MCF 10A (cell line): ENCODE measurements at regions of chr6 and their contacts with region 1.

Region 1: DNA sequence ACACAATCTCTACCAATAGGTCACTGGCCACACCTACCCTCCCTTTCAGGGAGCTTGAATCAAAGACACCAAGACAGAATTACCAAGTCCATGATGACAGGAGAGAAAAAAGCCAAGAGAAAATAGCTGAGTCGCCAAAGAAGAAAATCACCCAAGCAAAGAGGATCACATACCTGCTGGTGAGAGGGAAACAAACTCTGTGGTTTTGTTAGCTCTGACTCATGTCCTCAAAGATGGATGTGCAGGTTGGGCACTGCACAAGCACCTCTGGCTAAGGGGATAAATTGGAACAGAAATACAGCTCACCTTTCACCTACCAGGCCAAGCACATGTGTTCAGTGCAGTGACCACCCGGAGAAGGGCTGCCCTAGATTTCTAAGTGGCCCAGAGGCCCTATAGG is 114.8 kb downstream of the TFAP2A start:
- DNase-seq: peak; percentile 67
- H3K4me3 Mint-ChIP-seq: no peak overlapping the region
- H3K27ac Mint-ChIP-seq: peak overlapping the region; percentile 50
- H3K4me1 Mint-ChIP-seq: peaks cover 8% of the 10 kb centered on the region
- H3K27me3 Mint-ChIP-seq: no peaks in the 10 kb centered on the region
- CTCF ChIP-seq: no peak

Region 2: DNA sequence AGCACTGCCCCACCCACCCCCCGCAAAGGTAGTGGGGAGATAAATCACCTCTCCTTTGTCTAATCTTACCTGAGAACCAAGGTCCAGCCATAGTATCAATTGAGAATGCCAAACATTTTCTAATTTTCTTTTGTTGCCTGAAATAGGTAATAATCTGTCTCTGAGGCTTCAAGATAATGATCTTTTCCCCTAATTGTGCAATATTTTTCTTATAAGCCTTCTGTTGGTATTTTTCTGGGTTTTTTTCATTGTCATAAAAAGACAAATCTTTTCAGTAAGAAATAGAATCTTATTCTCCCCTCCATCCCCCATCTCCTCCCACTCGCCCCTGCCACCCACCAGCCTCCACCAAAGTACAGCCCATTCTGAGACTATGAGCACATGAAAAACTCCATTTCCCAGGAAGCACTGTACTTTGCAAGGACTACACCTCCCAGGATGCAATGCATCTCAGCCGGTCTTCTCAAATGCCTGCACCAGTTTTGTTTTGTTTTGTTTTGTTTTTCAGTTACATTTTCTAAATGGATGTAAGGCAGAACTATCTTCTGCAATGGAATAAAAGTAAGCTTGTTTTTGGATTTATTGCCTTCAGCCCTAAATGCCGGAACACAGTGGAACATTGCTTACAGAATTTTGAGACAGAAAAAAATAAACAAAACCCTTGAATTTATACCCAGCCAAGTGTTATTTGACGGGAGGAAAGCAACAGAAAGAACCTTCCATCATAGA is 153.2 kb before region 1 on chr6:
- CTCF ChIA-PET with region 1: no interaction called
- POLR2A ChIA-PET with region 1: no interaction called
- intact Hi-C with region 1: no loop called
- DNase-seq: peak; percentile 59
- H3K4me3 Mint-ChIP-seq: peak overlapping the region; percentile 51
- H3K27ac Mint-ChIP-seq: peak overlapping the region; percentile 14
- H3K4me1 Mint-ChIP-seq: peaks cover 30% of the 10 kb centered on the region
- H3K27me3 Mint-ChIP-seq: no peaks in the 10 kb centered on the region
- CTCF ChIP-seq: no peak

Region 3: GRCh38 chr6:10276106-10276505 is 24.0 kb before region 1 on chr6:
- CTCF ChIA-PET with region 1: no interaction called
- POLR2A ChIA-PET with region 1: no interaction called
- intact Hi-C with region 1: no loop called
- DNase-seq: peak; percentile 8
- H3K4me3 Mint-ChIP-seq: no peak overlapping the region
- H3K27ac Mint-ChIP-seq: peak overlapping the region; percentile 59
- H3K4me1 Mint-ChIP-seq: peaks cover 21% of the 10 kb centered on the region
- H3K27me3 Mint-ChIP-seq: no peaks in the 10 kb centered on the region
- CTCF ChIP-seq: no peak

Region 4: DNA sequence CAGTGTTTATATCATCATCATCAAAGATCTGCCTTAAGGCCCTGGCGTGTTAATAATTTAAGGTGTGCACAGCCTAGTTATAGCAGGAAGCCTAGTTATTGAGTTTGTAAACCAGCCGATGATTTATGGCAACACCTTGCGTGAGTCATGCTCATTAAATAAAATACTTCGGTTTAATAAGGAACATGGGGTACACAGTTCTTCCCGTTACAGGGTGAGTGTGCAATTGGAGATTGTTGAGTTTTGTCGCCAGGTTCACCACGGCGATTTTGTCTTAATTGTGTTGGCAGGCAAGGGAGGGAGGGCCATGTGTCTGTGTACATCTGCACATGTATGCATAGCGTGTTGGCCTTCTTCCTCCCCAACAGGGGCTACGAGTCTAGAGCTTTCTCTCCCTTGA is 10.8 kb after region 1 on chr6:
- CTCF ChIA-PET with region 1: interaction called, 3 read pairs
- POLR2A ChIA-PET with region 1: interaction called, 17 read pairs
- intact Hi-C with region 1: no loop called
- DNase-seq: peak; percentile 56
- H3K4me3 Mint-ChIP-seq: peak overlapping the region; percentile 24
- H3K27ac Mint-ChIP-seq: peak overlapping the region; percentile 55
- H3K4me1 Mint-ChIP-seq: peaks cover 31% of the 10 kb centered on the region
- H3K27me3 Mint-ChIP-seq: no peaks in the 10 kb centered on the region
- CTCF ChIP-seq: no peak

Region 5: DNA sequence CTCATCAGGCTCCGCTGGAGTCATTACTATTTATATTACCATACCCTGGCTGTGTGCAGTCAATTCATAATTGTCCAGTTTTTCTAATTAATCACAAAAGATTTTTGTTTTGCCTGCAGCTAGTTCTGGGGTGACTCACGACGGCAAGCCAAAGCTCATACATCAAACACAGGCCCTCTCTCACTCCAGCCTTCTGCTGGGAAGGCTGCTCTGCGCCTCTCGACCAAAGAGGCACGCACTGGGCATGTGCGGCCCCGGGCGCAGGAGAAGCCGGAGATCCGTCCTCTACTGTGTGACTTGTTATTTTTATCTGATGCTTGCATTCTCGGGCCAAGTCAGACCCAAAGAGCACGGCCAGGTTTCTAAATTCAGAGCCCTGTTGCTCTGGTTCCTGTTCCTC is 16.3 kb after region 1 on chr6:
- CTCF ChIA-PET with region 1: no interaction called
- POLR2A ChIA-PET with region 1: interaction called, 17 read pairs
- intact Hi-C with region 1: no loop called
- DNase-seq: peak; percentile 88
- H3K4me3 Mint-ChIP-seq: peak overlapping the region; percentile 28
- H3K27ac Mint-ChIP-seq: peak overlapping the region; percentile 86
- H3K4me1 Mint-ChIP-seq: peaks cover 14% of the 10 kb centered on the region
- H3K27me3 Mint-ChIP-seq: no peaks in the 10 kb centered on the region
- CTCF ChIP-seq: no peak

Region 6: DNA sequence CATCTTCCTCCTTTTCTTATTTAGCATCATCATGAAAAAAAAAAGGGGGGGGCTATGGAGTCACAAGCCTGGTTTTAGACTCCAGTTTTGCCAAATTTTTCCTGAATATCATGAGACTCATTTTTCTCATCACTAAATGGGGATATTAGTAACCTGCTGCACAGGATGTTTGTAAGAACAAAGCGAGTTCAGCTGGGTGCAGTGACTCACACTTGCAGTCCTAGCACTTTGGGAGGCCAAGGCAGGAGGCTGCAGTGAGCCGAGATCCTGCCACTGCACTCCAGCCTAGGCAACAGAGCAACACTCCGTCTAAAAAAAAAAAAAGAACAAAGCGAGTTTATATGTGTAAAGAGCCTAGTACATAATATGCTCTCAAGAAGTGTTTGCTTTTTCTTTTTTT is 32.0 kb after region 1 on chr6:
- CTCF ChIA-PET with region 1: no interaction called
- POLR2A ChIA-PET with region 1: no interaction called
- intact Hi-C with region 1: no loop called
- DNase-seq: no peak
- H3K4me3 Mint-ChIP-seq: no peak overlapping the region
- H3K27ac Mint-ChIP-seq: no peak overlapping the region
- H3K4me1 Mint-ChIP-seq: no peaks in the 10 kb centered on the region
- H3K27me3 Mint-ChIP-seq: no peaks in the 10 kb centered on the region
- CTCF ChIP-seq: no peak

Region 7: DNA sequence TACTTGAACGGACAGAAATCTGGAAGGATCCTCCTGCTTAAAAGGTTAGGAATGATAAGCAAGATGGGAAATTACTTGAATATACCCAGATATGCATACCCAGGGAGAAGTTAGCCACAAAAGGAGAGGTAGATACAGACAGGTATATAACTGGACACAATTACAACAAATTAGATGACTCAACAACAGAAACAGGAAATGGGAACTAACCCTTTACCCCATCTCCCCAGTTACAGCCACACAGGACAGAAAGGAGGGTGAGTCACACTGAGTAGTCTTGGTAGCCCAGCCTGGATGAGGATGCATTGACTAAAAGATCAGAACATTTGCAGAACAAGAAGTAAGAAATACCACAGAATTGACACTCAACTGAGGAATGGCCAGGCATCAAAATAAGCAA is 333.1 kb after region 1 on chr6:
- CTCF ChIA-PET with region 1: no interaction called
- POLR2A ChIA-PET with region 1: no interaction called
- intact Hi-C with region 1: no loop called
- DNase-seq: peak; percentile 86
- H3K4me3 Mint-ChIP-seq: no peak overlapping the region
- H3K27ac Mint-ChIP-seq: peak overlapping the region; percentile 68
- H3K4me1 Mint-ChIP-seq: peaks cover 9% of the 10 kb centered on the region
- H3K27me3 Mint-ChIP-seq: no peaks in the 10 kb centered on the region
- CTCF ChIP-seq: no peak